ENCODE measurements at regions of chrX and their contacts with region 1.

Region 1: DNA sequence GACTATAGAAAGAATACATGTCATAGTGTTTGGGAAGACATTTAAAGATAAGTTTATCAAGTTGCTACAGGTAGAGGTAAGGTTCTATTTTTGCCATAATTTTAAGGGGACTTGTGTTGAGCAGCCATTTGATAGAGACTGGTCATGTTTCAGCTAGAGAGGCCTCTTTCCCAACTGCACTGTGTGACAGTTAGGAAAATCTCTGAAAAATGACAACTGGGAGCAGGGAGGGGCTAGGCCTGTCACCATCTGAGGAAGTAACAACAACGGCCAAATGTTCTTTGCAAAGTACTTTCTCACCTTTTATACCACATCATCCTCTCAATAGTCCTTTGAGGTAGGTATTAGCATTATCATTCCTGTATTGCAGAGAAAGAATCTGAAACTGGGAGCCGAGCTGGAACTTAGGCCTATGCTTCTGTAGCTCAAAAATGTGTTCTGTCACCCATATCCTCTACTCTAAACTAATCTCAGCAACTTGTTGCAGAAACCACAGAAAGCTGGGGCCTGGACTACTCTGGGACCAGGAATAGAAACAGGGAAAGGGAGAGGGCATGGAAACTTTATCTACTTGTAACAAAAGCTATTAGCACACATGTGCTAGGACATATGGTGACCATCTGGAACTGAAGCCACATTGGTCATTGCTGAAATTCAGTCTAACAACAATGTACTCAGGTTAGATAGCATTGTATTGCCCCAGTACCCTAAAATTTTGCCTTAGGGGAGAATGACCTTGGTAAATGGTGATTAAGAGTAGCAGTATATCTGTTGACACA is 198.9 kb downstream of the MID1IP1 start:
- DNase-seq: no peak
- ATAC-seq: no peak
- H3K4me3 ChIP-seq: no peak overlapping the region
- H3K4me1 ChIP-seq: no peaks in the 10 kb centered on the region
- CTCF ChIP-seq: no peak

Region 2: DNA sequence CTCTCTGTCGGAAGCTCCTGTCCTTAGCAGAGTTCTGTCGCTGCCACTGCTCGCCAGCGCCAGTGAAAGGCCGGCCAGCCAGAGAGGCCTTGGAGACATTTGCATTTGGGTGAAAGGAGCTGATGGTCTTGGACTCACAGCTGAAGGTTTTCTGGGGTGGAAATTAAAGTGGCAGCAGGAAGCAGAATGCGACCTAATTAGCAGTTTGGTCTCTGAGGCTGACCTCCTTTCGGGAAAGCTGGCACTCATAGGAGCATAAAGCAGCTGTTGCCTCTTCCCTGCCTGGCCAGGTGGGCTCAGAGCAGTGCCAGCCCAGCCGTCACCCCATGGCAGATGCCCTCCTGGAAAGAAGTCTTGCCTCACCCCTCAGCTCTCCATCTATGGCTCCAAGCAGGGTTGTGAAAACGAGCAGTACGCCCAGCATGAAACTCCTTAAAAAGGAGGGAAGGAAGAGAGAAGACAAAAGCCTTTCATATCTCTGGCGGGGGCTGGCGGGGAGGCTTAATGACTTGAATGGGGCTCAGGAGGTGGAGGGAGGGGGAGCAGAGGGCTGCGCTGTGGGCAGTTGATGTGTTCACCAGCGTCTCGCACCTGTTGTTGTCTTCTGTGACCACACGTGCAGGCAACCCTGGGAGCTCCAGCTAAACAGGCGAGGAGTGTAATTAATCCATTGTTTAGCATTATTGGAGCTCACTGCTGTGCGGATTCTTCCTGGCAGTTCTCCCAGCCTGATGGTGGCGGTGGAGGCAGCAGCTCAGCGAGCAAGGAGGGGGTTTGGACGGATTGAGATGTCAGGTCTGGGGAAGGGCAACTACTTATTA is 65.1 kb after region 1 on chrX:
- intact Hi-C with region 1: loop called in 1 of 2 experiments (anchors 10 kb)
- DNase-seq: peak in 1 of 3 donors; percentile 2
- ATAC-seq: no peak
- H3K4me3 ChIP-seq: no peak overlapping the region
- H3K4me1 ChIP-seq: no peaks in the 10 kb centered on the region
- CTCF ChIP-seq: no peak